ENCODE measurements at regions of chr17 and their contacts with region 1.

Region 1: DNA sequence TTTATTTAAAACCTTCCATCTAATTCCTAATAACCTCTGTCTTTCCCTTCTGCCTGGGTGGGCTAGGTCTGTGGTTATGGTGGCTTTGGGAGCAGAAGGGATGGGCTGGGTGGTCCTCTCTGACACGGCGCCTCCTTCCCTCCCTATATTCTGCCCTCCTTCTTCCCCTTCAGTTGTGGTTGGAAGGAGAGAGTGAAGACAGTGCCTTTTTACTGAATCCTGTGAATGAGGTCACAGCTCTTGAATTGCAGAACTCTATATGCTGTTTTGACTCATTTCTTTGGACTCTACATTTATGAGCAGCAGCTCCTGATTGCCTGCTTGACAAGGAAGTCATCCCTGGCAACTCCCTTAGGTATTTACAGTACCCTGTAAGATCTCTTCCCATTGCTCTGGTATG is 256.0 kb upstream of the ELAC2 start:
- DNase-seq: no peak

Region 2: GRCh38 chr17:13134050-13134449 is 139.8 kb before region 1 on chr17:
- intact Hi-C with region 1: loop called in 1 of 2 experiments (anchors 2 kb)
- DNase-seq: no peak

Region 3: GRCh38 chr17:13222949-13223348 is 50.9 kb before region 1 on chr17:
- intact Hi-C with region 1: no loop called
- DNase-seq: no peak

Region 4: GRCh38 chr17:13263746-13264145 is 10.1 kb before region 1 on chr17:
- intact Hi-C with region 1: loop called in 1 of 2 experiments (anchors 1 kb)
- DNase-seq: no peak

Region 5: DNA sequence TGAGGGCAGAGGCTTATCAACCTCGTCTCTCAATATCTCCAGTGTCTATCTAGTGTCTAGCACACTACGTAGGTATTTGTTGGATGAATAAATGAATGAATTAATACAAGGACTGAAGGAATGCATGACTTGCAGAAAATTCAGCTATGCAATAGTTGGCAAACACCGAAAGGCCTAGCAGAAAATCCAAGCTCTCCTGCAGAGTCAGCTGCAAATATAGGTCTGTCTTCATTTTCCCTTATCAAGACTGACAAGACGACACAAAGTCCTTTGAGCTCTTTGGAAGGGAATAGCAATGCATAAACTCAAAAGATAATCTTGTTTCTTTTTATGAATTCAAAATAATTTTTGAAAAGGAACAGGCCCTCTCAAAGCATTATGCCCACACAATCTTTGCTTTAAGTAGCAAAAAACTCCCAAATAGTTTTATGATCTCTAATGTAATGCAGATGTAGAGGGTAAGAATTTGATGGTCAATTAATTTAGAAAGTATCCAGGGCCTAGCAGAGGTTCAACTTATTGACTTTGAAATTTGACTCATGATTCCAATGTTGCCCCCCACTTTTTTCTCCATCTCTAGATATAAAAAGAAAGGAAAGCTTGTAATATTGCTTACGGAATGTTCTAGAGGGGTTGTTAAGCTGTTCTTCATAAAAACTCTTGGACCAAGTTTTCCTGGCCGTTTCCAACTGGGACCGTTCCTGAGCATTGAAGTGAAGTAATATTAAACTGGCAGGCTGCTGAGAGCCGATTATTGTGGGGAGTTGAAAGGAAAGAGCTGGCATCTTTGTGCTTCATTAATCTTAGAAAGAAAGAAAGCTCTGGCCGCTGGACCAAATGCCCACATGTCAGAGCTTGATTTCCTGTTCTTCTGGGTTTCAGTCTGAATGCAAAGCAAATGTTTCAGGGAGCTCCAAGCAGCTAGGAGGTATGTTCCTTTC is 100.7 kb after region 1 on chr17:
- intact Hi-C with region 1: no loop called
- DNase-seq: no peak